ENCODE measurements at regions of chr13 and their contacts with region 1.

Region 1: GRCh38 chr13:30465585-30466357 is at the start of gene HMGB1:
- DNase-seq: peak; percentile 99 to 100 (median 100)
- H3K4me3 ChIP-seq: peak within 1 kb of the TSS; percentile 50 to 94 (median 79)
- H3K27ac ChIP-seq: peak within 1 kb of the TSS; percentile 61 to 100 (median 98)
- H3K27me3 ChIP-seq: no peaks in the 10 kb centered on the region
- CTCF ChIP-seq: peak in 10 of 56 donors; percentile 8 to 34 (median 20)
- total RNA-seq, gene HMGB1: 153 to 327 (median 228) TPM

Region 2: GRCh38 chr13:29508130-29508875 is 957.5 kb before region 1 on chr13:
- intact Hi-C with region 1: loop called in 1 of 2 experiments (anchors 5 kb)
- DNase-seq: peak; percentile 82 to 92 (median 88)
- H3K4me3 ChIP-seq: no peak overlapping the region
- H3K27ac ChIP-seq: peak overlapping the region in 33 of 59 donors; percentile 2 to 80 (median 39)
- H3K27me3 ChIP-seq: peaks cover 0 to 12% (median 0%) of the 10 kb centered on the region in 45 donors
- CTCF ChIP-seq: peak; percentile 83 to 99 (median 97)

Region 3: DNA sequence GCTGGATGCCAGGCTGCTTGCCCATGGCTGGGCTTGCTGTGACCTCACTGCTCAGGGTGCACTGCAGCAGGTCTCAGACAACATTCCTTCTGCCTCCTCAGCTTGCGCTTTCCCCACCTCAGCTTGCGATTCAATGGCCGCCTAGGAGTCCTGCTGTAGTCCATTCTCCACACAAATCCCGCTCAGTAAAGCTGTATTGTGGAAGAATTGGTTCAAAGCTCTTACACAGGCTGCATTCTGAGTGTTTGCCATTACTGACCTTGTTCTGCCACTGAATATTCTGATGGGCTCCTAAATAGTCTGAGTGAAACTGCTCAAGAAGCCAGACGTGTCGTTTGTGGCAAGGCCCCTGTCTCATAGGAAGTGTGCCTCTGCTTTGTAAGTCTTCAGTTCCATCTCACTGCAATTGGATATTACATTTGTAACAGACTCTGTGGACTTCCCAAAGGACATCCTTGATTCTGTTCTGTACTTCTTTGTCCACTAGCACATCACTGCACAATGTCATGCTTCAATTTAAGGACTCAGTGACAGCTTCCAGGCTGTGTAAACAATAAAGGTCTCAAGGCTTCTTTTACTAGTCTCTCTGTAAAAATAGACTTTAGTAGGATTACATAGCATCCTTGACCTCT is 208.2 kb before region 1 on chr13:
- intact Hi-C with region 1: loop called in 1 of 2 experiments (anchors 10 kb)
- DNase-seq: peak in 3 of 10 donors; percentile 33 to 64 (median 51)
- H3K4me3 ChIP-seq: peak overlapping the region in 8 of 59 donors; percentile 0 to 31 (median 12)
- H3K27ac ChIP-seq: peak overlapping the region in 53 of 59 donors; percentile 3 to 80 (median 64)
- H3K27me3 ChIP-seq: no peaks in the 10 kb centered on the region
- CTCF ChIP-seq: no peak

Region 4: GRCh38 chr13:30268673-30269072 is 197.1 kb before region 1 on chr13:
- intact Hi-C with region 1: no loop called
- DNase-seq: no peak
- H3K4me3 ChIP-seq: no peak overlapping the region
- H3K27ac ChIP-seq: no peak overlapping the region
- H3K27me3 ChIP-seq: no peaks in the 10 kb centered on the region
- CTCF ChIP-seq: no peak

Region 5: DNA sequence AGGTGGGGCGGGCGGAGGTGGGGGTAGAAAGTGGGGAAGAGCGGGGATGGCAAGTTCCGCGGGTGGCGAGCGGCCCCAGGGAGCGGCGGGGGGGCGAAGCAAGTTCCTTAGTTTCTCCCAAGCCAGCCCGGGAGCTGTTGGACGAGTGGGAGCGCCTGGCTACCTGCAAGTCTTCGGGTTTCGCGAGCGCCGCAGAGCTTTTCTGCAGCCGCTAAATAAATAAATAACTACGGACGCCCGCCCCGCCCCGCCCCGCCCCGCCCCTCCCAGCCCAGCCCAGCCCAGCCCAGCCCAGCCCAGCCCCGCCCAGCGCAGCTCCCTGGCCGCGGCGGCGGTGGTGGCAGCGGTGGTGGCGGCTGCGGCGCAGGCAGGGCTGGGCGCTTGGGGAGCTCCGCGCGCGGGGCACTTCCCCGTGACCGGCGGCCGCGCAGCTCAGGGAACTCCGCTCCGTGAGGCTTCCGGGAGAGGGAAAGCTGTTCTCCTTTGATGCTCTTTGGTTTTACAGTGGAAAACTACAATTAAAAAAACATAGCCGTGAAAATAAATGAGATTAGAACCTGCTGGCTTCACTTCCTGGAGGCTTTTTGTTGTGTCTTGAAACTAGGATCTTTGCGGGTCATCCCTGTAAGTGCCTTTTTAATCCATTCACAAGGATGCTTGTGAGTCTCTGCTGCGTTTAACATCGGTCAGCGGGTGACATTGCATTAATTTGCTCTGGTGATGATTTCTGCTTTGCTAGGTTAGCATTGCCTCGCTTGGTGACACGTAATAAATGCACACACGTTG is 43.5 kb before region 1 on chr13 and contains the start of gene UBE2L5:
- intact Hi-C with region 1: loop called (anchors 2 kb)
- DNase-seq: peak; percentile 60 to 84 (median 72)
- H3K4me3 ChIP-seq: peak within 1 kb of the TSS; percentile 48 to 86 (median 70)
- H3K27ac ChIP-seq: peak within 1 kb of the TSS; percentile 52 to 97 (median 92)
- H3K27me3 ChIP-seq: no peaks in the 10 kb centered on the region
- CTCF ChIP-seq: peak in 8 of 56 donors; percentile 6 to 32 (median 10)
- total RNA-seq, gene UBE2L5: 0.22 to 2.8 (median 0.73) TPM in 102 of 120 experiments, not detected in the others

Region 6: GRCh38 chr13:30673669-30674521 is 208.1 kb after region 1 on chr13:
- intact Hi-C with region 1: loop called in 1 of 2 experiments (anchors 10 kb)
- DNase-seq: peak; percentile 74 to 90 (median 86)
- H3K4me3 ChIP-seq: peak overlapping the region; percentile 33 to 77 (median 61)
- H3K27ac ChIP-seq: peak overlapping the region; percentile 27 to 91 (median 83)
- H3K27me3 ChIP-seq: no peaks in the 10 kb centered on the region
- CTCF ChIP-seq: peak; percentile 32 to 94 (median 76)

Region 7: DNA sequence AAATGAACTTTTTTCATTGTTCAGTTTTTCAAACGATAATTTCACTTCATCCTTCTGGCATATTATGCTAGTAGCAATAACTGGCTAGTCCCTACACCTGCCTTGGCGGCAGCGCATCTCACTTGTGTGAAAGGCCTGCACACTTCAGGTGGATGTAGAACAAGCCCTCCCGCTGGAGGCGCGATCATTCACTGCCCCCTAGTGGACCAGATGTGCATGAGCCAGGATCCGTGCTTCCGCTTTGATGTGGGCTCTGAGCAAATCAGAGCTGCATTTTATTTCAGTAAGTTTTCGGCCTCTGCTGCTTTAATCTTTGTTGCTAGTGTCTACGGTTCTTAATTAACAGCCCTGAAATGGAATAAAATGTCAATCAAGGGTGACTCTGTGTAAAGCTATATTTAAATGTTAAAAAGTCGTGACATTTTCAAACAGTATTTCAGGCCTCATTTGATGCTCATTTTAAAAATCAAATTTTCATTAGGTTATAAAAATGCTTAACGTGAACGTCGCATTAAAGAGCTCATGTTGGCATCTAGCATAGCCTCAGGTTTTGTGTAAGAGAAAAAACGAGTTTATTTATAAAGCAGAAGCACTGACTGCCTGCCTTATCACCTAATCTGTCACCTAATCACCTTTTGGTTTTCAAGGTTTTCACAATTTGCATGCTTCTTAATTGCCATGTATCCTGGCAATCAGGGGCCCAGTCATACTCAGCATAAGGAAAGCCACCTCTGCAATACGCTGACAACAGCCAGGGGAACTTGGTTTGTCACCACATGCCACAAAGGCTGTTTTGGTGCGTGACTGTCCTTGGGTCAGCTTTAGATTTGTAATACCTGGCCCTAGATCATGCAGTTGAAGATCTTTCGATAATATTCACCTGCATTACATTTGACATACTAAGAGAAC is 578.9 kb after region 1 on chr13:
- intact Hi-C with region 1: loop called (anchors 10 kb)
- DNase-seq: peak; percentile 70 to 88 (median 84)
- H3K4me3 ChIP-seq: no peak overlapping the region
- H3K27ac ChIP-seq: peak overlapping the region in 3 of 59 donors; percentile 14 to 38 (median 24)
- H3K27me3 ChIP-seq: peaks cover 0 to 5% (median 0%) of the 10 kb centered on the region in 45 donors
- CTCF ChIP-seq: peak; percentile 90 to 98 (median 96)

Measured in dorsolateral prefrontal cortex (tissue), 120 donors.